ENCODE measurements at regions of chr11 and their contacts with region 1.

Region 1: GRCh38 chr11:33257897-33258630 is 883 bp downstream of the HIPK3 start:
- DNase-seq: peak; percentile 67 to 83 (median 76)
- ATAC-seq: peak; percentile 71
- H3K4me3 ChIP-seq: peak overlapping the region; percentile 63
- H3K4me3 Mint-ChIP-seq: peak overlapping the region; percentile 89 to 99 (median 96)
- H3K27ac ChIP-seq: peak overlapping the region; percentile 97
- H3K27ac Mint-ChIP-seq: peak overlapping the region; percentile 93 to 99 (median 98)
- H3K4me1 ChIP-seq: peaks cover 27 to 28% of the 10 kb centered on the region in 2 donors
- H3K4me1 Mint-ChIP-seq: peaks cover 25 to 55% (median 44%) of the 10 kb centered on the region in 7 donors
- H3K27me3 ChIP-seq: no peaks in the 10 kb centered on the region
- H3K27me3 Mint-ChIP-seq: peaks cover 0 to 2% (median 0%) of the 10 kb centered on the region in 5 donors

Region 2: GRCh38 chr11:31509429-31510345 is 1748.4 kb before region 1 on chr11 and contains the starts of genes ELP4 and IMMP1L:
- CTCF ChIA-PET with region 1: no interaction called
- POLR2A ChIA-PET with region 1: no interaction called
- intact Hi-C with region 1: loop called in 1 of 2 experiments (anchors 10 kb)
- DNase-seq: peak; percentile 86 to 97 (median 95)
- ATAC-seq: peak; percentile 100
- H3K4me3 ChIP-seq: peak within 1 kb of the TSS; percentile 85
- H3K4me3 Mint-ChIP-seq: peak within 1 kb of the TSS; percentile 89 to 100 (median 99)
- H3K27ac ChIP-seq: peak within 1 kb of the TSS; percentile 79
- H3K27ac Mint-ChIP-seq: peak within 1 kb of the TSS; percentile 92 to 100 (median 98)
- H3K4me1 ChIP-seq: peaks cover 13 to 14% of the 10 kb centered on the region in 2 donors
- H3K4me1 Mint-ChIP-seq: peaks cover 21 to 70% (median 49%) of the 10 kb centered on the region in 7 donors
- H3K27me3 ChIP-seq: no peaks in the 10 kb centered on the region
- H3K27me3 Mint-ChIP-seq: peaks cover 0 to 2% (median 0%) of the 10 kb centered on the region in 5 donors
- total RNA-seq, gene ELP4: 16.8 to 23.2 (median 21.2) TPM
- total RNA-seq, gene IMMP1L: 9.4 to 20.0 (median 16.1) TPM

Region 3: DNA sequence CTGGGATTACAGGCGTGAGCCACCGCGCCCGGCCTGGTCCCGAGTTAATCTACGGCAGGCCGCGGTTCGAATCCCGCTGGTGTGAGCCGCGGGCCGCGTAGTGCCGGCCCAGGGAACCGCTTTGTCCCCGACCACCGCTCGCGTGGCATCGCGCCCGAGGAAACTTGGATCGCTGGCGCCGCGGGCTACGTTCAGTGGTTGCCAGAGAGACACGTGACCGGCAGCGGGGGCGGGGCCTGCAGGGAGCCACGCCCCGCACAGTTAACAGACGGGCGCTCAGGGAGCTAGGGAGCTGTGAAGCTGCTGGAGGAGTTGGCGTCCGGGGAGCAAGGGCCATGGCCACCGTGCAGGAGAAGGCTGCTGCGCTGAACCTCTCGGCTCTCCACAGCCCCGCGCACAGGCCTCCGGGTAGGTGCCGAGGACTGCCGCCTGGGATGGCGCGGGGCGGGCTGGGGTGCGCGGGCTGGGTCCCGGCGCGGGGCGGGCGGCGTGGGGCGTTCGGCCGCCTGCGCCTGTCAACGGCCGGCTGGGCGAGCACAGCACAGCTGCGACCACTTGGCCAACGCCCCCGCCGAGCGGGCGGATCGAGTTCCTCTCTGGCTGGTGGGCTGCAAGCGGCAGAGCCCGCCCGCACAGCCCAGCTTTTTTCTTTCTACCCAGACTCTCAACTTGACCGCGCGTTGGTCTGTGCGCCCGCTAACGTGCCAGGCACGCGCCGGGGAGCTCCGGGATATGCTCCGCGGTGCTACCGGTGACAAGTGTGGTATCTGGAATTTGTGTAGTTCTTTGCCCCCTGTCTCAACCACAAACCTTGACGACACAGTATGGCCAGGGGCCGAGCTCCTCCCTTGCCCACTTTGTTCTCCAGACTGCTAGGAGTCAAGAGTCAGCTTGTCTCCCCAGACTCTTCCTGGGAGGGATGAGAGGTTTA is 242.2 kb before region 1 on chr11 and contains the start of gene DEPDC7:
- CTCF ChIA-PET with region 1: no interaction called
- POLR2A ChIA-PET with region 1: no interaction called
- intact Hi-C with region 1: loop called in 1 of 2 experiments (anchors 5 kb)
- DNase-seq: peak; percentile 72 to 84 (median 81)
- ATAC-seq: peak; percentile 90
- H3K4me3 ChIP-seq: peak within 1 kb of the TSS; percentile 65
- H3K4me3 Mint-ChIP-seq: peak within 1 kb of the TSS; percentile 86 to 93 (median 90)
- H3K27ac ChIP-seq: peak within 1 kb of the TSS; percentile 50
- H3K27ac Mint-ChIP-seq: peak within 1 kb of the TSS in 6 of 9 donors; percentile 63 to 77 (median 69)
- H3K4me1 ChIP-seq: peaks cover 14 to 23% of the 10 kb centered on the region in 2 donors
- H3K4me1 Mint-ChIP-seq: peaks cover 14 to 73% (median 58%) of the 10 kb centered on the region in 7 donors
- H3K27me3 ChIP-seq: peaks cover 0 to 7% of the 10 kb centered on the region in 2 donors
- H3K27me3 Mint-ChIP-seq: peaks cover 0 to 74% (median 5%) of the 10 kb centered on the region in 5 donors
- total RNA-seq, gene DEPDC7: 0.65 to 9.6 (median 2.1) TPM

Region 4: GRCh38 chr11:33291004-33291777 is 33.1 kb after region 1 on chr11:
- CTCF ChIA-PET with region 1: no interaction called
- POLR2A ChIA-PET with region 1: no interaction called
- intact Hi-C with region 1: loop called in 1 of 2 experiments (anchors 5 kb)
- DNase-seq: no peak
- ATAC-seq: no peak
- H3K4me3 ChIP-seq: no peak overlapping the region
- H3K4me3 Mint-ChIP-seq: no peak overlapping the region
- H3K27ac ChIP-seq: no peak overlapping the region
- H3K27ac Mint-ChIP-seq: peak overlapping the region in 2 of 9 donors; percentile 9 to 40
- H3K4me1 ChIP-seq: no peaks in the 10 kb centered on the region
- H3K4me1 Mint-ChIP-seq: peaks cover 3 to 60% (median 52%) of the 10 kb centered on the region in 7 donors
- H3K27me3 ChIP-seq: no peaks in the 10 kb centered on the region
- H3K27me3 Mint-ChIP-seq: no peaks in the 10 kb centered on the region

Region 5: DNA sequence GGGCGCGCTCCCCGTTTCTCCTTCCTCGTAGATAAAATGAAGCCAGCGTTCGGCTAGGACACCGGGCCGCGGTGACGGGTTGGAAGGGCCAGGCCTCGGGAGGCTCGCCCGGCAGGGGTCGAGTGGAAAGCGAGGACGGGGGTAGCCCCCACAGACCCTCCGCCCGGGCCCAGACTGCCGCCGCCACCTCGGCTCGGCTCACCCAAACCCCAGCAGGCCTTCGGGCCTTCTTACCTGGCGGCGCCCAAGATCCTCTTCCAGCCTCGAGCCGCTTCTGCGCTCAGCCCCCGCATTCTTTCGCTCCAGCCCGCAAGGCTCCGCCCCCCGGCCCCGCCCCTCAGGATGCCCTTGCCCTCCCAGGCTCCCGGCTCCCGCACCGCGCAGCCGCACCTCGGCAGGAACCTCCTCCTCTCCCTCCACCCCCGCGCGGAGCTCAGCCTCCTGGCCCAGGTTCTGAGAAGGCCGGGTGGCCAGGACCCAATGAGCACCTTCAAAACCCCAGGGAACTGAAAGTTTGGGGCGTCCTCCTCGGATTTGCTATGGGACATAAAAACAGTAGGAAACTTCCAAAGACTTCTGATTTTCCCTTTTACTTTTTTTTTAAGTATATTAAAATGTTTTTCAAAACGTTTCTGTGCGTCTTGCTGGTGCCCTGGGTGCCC is 478.2 kb after region 1 on chr11 and contains the start of gene CD59:
- CTCF ChIA-PET with region 1: no interaction called
- POLR2A ChIA-PET with region 1: no interaction called
- intact Hi-C with region 1: loop called (anchors 1 to 2 kb)
- DNase-seq: peak; percentile 75 to 94 (median 85)
- ATAC-seq: peak; percentile 92
- H3K4me3 ChIP-seq: peak within 1 kb of the TSS; percentile 76
- H3K4me3 Mint-ChIP-seq: peak within 1 kb of the TSS; percentile 87 to 97 (median 92)
- H3K27ac ChIP-seq: peak within 1 kb of the TSS; percentile 72
- H3K27ac Mint-ChIP-seq: peak within 1 kb of the TSS; percentile 79 to 94 (median 86)
- H3K4me1 ChIP-seq: peaks cover 9 to 17% of the 10 kb centered on the region in 2 donors
- H3K4me1 Mint-ChIP-seq: peaks cover 21 to 41% (median 36%) of the 10 kb centered on the region in 7 donors
- H3K27me3 ChIP-seq: no peaks in the 10 kb centered on the region
- H3K27me3 Mint-ChIP-seq: peaks cover 0 to 11% (median 0%) of the 10 kb centered on the region in 5 donors
- total RNA-seq, gene CD59: 23.3 to 152 (median 62.7) TPM

Region 6: GRCh38 chr11:34438529-34439507 is 1180.8 kb after region 1 on chr11 and contains the start of gene CAT:
- CTCF ChIA-PET with region 1: no interaction called
- POLR2A ChIA-PET with region 1: no interaction called
- intact Hi-C with region 1: loop called in 1 of 2 experiments (anchors 5 kb)
- DNase-seq: peak; percentile 94 to 98 (median 97)
- ATAC-seq: peak; percentile 98
- H3K4me3 ChIP-seq: peak within 1 kb of the TSS; percentile 90
- H3K4me3 Mint-ChIP-seq: peak within 1 kb of the TSS; percentile 88 to 98 (median 96)
- H3K27ac ChIP-seq: peak within 1 kb of the TSS; percentile 79
- H3K27ac Mint-ChIP-seq: peak within 1 kb of the TSS; percentile 89 to 97 (median 93)
- H3K4me1 ChIP-seq: peaks cover 7 to 19% of the 10 kb centered on the region in 2 donors
- H3K4me1 Mint-ChIP-seq: peaks cover 21 to 47% (median 35%) of the 10 kb centered on the region in 7 donors
- H3K27me3 ChIP-seq: no peaks in the 10 kb centered on the region
- H3K27me3 Mint-ChIP-seq: no peaks in the 10 kb centered on the region
- total RNA-seq, gene CAT: 23.3 to 55.9 (median 42.6) TPM

Measured in naive thymus-derived CD4-positive, alpha-beta T cell (primary cell).